Activated CD8-positive, alpha-beta T cell treated with anti-CD3 and anti-CD28 coated beads for 36 hours (primary cell): ENCODE measurements at regions of chr19 and their contacts with region 1.

Region 1: DNA sequence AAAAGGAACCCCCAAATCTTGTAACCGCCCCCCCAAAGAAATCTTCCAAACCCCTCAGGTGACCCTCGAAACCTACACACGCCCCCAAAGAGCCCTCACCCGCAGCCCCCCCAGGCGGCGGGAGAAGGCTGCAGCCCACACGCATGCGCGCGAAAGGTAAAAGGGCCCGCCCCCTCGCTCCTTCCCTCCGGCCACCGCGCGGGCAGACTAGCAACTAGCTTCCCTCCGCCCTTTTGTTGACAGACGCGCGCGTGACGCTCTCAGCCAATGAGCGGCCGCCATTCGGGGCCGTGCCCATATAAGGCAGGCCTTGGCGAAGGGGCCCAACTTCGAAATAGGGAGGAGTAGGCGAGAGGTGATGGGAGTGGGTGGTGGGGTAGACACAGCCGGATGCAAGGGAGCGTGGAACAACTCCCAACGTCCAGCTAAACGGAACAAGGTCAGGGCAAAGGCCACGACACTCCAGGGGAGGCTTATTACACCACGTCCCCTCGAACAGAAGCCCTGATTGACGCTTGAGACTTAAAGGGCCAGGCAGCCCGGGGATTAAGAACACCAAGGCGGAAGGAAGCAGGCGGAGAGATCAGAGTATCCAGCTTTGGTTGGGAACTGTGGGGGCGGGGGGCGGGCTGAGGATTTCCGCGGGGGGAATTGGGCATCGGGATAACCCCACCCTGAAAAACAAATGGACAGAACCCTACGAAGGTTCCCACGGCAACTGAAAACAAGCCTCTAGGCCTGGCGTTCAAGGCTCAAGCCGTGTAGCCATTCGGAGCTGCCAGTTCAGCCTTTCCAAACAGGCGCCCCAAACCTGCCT is 13.3 kb downstream of the FBXO46 start:
- DNase-seq: peak; percentile 99
- ATAC-seq: peak; percentile 97
- H3K4me3 Mint-ChIP-seq: peak overlapping the region; percentile 95
- H3K27ac Mint-ChIP-seq: peak overlapping the region; percentile 93
- H3K4me1 Mint-ChIP-seq: peaks cover 33% of the 10 kb centered on the region
- H3K27me3 Mint-ChIP-seq: no peaks in the 10 kb centered on the region
- CTCF ChIP-seq: no peak

Region 2: GRCh38 chr19:45730389-45731288 is 13.3 kb after region 1 on chr19 and contains the start of gene FBXO46:
- CTCF ChIA-PET with region 1: interaction called, 9 read pairs
- POLR2A ChIA-PET with region 1: interaction called, 23 read pairs
- intact Hi-C with region 1: no loop called
- DNase-seq: peak; percentile 98
- ATAC-seq: peak; percentile 99
- H3K4me3 Mint-ChIP-seq: peak within 1 kb of the TSS; percentile 96
- H3K27ac Mint-ChIP-seq: peak within 1 kb of the TSS; percentile 94
- H3K4me1 Mint-ChIP-seq: peaks cover 24% of the 10 kb centered on the region
- H3K27me3 Mint-ChIP-seq: no peaks in the 10 kb centered on the region
- CTCF ChIP-seq: no peak
- total RNA-seq, gene FBXO46: 28.6 to 34.7 TPM

Region 3: DNA sequence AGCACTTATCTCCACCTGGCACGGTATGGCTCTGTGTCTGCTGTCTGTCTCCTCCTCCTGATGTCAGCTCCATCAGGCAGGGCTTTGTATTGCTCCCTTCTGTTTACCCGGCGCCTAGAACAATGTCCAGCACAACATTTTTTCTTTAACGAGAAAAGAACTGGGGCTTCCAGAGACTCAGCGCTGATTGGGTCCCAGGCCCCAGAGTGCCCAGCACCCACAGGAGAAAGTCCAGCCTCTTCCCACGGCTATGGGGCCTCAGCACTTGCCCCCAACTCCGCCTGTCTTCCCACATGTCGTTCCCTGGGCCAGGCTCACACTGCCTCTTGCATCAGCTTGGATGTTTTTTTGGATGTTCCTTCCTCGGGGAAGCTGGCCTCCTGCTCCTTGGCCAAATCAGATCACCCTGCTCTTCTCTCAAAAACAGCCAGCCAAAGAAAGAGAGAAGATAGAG is 178.2 kb after region 1 on chr19:
- CTCF ChIA-PET with region 1: no interaction called
- POLR2A ChIA-PET with region 1: no interaction called
- intact Hi-C with region 1: no loop called
- DNase-seq: no peak
- ATAC-seq: no peak
- H3K4me3 Mint-ChIP-seq: no peak overlapping the region
- H3K27ac Mint-ChIP-seq: no peak overlapping the region
- H3K4me1 Mint-ChIP-seq: peaks cover 5% of the 10 kb centered on the region
- H3K27me3 Mint-ChIP-seq: no peaks in the 10 kb centered on the region
- CTCF ChIP-seq: no peak